Pancreas (tissue), 10 donors: ENCODE measurements at regions of chr9 and their contacts with region 1.

Region 1: DNA sequence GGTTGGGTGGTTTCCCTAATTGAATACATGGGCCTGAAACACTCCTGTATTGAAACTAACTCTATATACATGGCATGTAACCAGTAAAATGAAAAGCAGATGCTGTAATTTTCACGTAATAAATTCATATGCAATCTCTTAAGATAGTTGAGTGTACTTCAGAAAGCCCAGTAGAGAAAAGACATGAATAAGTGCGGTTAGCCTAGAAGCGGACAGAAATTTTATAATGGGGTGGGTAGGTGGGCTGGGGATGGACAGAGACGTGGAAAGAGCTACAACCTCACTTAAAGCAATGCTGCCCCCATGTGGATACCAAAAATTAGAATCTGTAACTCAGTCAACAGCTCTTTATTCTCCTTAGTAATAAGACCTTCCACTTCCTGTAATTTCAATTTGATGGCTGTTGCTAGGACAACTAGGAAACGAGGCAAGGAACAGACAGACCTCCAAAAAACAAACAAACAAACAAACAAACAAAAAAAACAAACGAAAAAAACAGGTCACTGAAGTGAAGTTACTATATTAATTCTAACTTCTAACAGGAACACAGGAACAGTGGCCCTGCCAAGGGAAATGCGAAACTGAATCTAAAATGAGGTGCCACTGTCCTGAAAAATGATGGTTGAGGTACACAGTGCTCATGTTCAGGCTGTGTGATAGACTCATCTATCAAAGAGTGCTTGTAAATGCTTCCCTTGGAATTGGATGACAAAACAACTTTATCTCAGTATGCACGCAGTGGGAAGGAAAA is 103.4 kb upstream of the GNA14 start:
- DNase-seq: peak in 1 of 6 donors; percentile 19
- ATAC-seq: peak; percentile 63 to 93 (median 87)
- H3K4me3 ChIP-seq: no peak overlapping the region
- H3K27ac ChIP-seq: peak overlapping the region in 1 of 4 donors; percentile 24
- H3K4me1 ChIP-seq: peaks cover 0 to 4% (median 0%) of the 10 kb centered on the region in 3 donors
- H3K27me3 ChIP-seq: no peaks in the 10 kb centered on the region
- CTCF ChIP-seq: peak in 2 of 4 donors; percentile 31

Region 2: GRCh38 chr9:77092536-77092935 is 659.0 kb before region 1 on chr9:
- intact Hi-C with region 1: no loop called
- DNase-seq: no peak
- ATAC-seq: no peak
- H3K4me3 ChIP-seq: no peak overlapping the region
- H3K27ac ChIP-seq: no peak overlapping the region
- H3K4me1 ChIP-seq: no peaks in the 10 kb centered on the region
- H3K27me3 ChIP-seq: peaks cover 0 to 3% (median 0%) of the 10 kb centered on the region in 4 donors
- CTCF ChIP-seq: no peak

Region 3: DNA sequence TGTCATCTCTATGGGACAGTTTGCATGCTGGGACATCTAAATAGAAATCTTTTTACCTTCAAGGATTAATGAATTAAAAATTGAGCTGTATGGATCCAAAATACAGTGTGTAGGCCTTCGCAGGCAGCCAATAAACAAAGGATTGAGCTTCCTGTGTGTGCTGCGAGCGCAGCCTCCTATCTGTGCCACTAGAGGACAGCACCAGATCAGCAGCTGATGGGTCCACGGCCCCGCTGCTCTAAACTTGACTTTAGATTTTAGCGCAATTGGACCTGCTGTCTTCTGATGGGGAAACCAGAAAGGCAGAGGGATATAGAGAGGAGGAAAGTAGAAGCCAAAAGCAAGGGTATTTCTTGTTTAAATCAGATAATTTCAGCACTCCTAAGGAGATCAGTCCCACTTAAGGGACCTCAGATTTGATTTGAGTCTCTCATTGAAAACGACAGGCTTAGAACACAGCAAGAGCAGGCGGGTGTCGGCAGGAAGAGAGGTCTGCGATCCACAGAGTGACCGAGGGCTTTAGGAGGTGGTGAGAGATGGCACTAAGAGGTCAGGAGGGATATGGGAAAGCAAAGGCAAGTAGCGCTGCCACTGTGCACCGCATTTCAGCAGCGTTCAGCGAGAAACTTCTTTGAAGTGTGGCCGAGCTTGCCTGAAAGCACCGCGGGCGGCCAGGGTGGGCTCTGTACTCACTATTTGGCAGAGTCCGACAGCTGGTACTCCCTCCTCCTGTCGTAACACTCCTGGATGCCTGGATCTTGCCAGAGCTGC is 317.7 kb before region 1 on chr9:
- intact Hi-C with region 1: loop called in 1 of 3 experiments (anchors 10 kb)
- DNase-seq: peak; percentile 41 to 84 (median 59)
- ATAC-seq: peak; percentile 91 to 99 (median 96)
- H3K4me3 ChIP-seq: no peak overlapping the region
- H3K27ac ChIP-seq: no peak overlapping the region
- H3K4me1 ChIP-seq: peaks cover 0 to 6% (median 0%) of the 10 kb centered on the region in 3 donors
- H3K27me3 ChIP-seq: no peaks in the 10 kb centered on the region
- CTCF ChIP-seq: peak; percentile 83 to 94 (median 91)

Region 4: DNA sequence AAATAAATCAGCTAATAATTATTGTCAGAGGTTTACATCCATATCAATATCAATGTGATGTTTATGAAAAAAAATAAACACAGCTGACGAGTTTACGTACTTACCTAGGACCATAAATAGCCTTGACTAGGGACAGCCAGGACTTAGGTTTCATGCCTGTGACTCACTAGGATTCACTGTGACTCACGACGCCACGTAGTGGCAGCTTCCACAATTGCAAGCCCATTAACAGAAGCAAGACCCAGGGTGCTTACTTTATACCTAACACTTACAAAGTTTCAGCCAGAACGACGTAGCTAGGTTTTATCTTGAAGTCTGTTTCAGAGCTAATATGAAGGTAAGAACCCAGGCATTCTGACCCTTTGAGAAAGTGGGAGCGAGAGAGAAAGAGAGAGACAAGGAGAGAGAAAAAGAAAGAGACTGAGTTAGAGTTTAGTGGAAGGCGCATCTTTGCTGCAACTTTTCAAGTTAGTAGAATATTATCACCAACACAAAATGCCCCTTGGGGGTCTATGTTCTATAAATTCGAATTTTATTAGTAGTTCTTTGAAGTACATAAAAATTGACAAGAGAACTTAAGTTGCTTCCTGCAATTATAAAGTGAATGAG is 294.6 kb before region 1 on chr9:
- intact Hi-C with region 1: loop called in 1 of 3 experiments (anchors 5 kb)
- DNase-seq: peak; percentile 69 to 93 (median 90)
- ATAC-seq: peak; percentile 94 to 97 (median 96)
- H3K4me3 ChIP-seq: no peak overlapping the region
- H3K27ac ChIP-seq: no peak overlapping the region
- H3K4me1 ChIP-seq: no peaks in the 10 kb centered on the region
- H3K27me3 ChIP-seq: no peaks in the 10 kb centered on the region
- CTCF ChIP-seq: peak; percentile 84 to 88 (median 86)

Region 5: DNA sequence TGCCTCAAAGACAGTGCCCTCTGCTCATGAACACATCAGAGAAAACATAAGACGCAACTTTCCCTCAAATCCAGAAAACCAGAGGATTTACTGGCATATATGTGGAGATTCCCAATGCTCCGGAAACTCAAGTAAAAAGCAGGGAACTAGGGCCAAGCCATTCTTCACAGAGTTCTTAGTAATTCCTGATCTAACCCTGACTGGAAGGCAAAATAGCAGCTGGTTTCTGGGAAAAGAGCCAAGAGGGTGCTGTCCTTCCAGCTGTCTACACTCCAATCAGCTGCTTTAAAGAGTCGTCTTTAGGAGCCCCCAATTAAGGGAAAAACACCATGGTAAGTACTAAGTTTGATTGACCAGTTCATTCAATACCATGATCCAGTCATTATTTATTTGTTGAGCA is 153.0 kb before region 1 on chr9:
- intact Hi-C with region 1: no loop called
- DNase-seq: peak in 3 of 6 donors; percentile 37 to 46 (median 38)
- ATAC-seq: peak; percentile 55 to 80 (median 74)
- H3K4me3 ChIP-seq: no peak overlapping the region
- H3K27ac ChIP-seq: no peak overlapping the region
- H3K4me1 ChIP-seq: peaks cover 0 to 5% (median 0%) of the 10 kb centered on the region in 3 donors
- H3K27me3 ChIP-seq: no peaks in the 10 kb centered on the region
- CTCF ChIP-seq: no peak

Region 6: GRCh38 chr9:77697238-77697984 is 54.1 kb before region 1 on chr9:
- intact Hi-C with region 1: no loop called
- DNase-seq: no peak
- ATAC-seq: no peak
- H3K4me3 ChIP-seq: no peak overlapping the region
- H3K27ac ChIP-seq: no peak overlapping the region
- H3K4me1 ChIP-seq: no peaks in the 10 kb centered on the region
- H3K27me3 ChIP-seq: no peaks in the 10 kb centered on the region
- CTCF ChIP-seq: no peak